Panc1 (cell line): ENCODE measurements at regions of chr9 and their contacts with region 1.

Region 1: GRCh38 chr9:124771021-124771866 is at the start of gene NR6A1:
- DNase-seq: peak; percentile 86
- ATAC-seq: peak; percentile 92
- H3K4me3 ChIP-seq: peak within 1 kb of the TSS; percentile 70 to 74
- H3K27ac ChIP-seq: peak within 1 kb of the TSS; percentile 90
- H3K4me1 ChIP-seq: peaks cover 25% of the 10 kb centered on the region
- H3K27me3 ChIP-seq: no peaks in the 10 kb centered on the region
- CTCF ChIP-seq: peak; percentile 38; the same call in 1 of the 2 replicates
- total RNA-seq, gene NR6A1: 7.6 TPM

Region 2: DNA sequence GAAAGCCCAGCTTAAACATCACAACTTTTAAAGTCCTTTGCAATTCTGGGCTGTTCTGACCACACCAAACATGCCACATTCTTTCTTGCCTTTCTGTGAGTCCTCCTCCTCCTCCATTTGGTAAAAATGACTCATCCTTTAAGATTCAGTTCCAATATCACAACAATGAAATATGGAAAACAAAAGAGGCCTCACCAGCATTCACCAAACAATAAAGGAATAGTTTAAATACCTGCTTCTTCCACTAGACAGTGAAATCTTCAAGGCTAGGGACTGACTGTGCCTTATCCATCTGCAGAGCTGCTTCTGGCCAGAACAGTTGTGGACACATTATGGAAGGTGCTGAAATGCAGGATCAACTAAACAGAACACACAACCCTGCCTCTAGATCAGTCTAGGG is 36.1 kb before region 1 on chr9:
- CTCF ChIA-PET with region 1: interaction called, 10 read pairs
- POLR2A ChIA-PET with region 1: no interaction called
- in situ Hi-C with region 1: no loop called
- intact Hi-C with region 1: no loop called
- DNase-seq: no peak
- ATAC-seq: peak; percentile 66
- H3K4me3 ChIP-seq: no peak overlapping the region
- H3K27ac ChIP-seq: peak overlapping the region; percentile 2; the same call in 1 of the 2 replicates
- H3K4me1 ChIP-seq: peaks cover 33% of the 10 kb centered on the region
- H3K27me3 ChIP-seq: no peaks in the 10 kb centered on the region
- CTCF ChIP-seq: no peak

Region 3: GRCh38 chr9:124808241-124808956 is 37.2 kb after region 1 on chr9:
- CTCF ChIA-PET with region 1: interaction called, 10 read pairs
- POLR2A ChIA-PET with region 1: interaction called, 4 read pairs
- in situ Hi-C with region 1: no loop called
- intact Hi-C with region 1: no loop called
- DNase-seq: no peak
- ATAC-seq: no peak
- H3K4me3 ChIP-seq: no peak overlapping the region
- H3K27ac ChIP-seq: no peak overlapping the region
- H3K4me1 ChIP-seq: peaks cover under 1% of the 10 kb centered on the region
- H3K27me3 ChIP-seq: no peaks in the 10 kb centered on the region
- CTCF ChIP-seq: no peak

Region 4: GRCh38 chr9:125137200-125137599 is 366.0 kb after region 1 on chr9:
- CTCF ChIA-PET with region 1: interaction called, 10 read pairs
- POLR2A ChIA-PET with region 1: no interaction called
- in situ Hi-C with region 1: no loop called
- intact Hi-C with region 1: no loop called
- DNase-seq: no peak
- ATAC-seq: no peak
- H3K4me3 ChIP-seq: no peak overlapping the region
- H3K27ac ChIP-seq: no peak overlapping the region
- H3K4me1 ChIP-seq: no peaks in the 10 kb centered on the region
- H3K27me3 ChIP-seq: no peaks in the 10 kb centered on the region
- CTCF ChIP-seq: no peak